ENCODE measurements at regions of chr3 and their contacts with region 1.

Region 1: DNA sequence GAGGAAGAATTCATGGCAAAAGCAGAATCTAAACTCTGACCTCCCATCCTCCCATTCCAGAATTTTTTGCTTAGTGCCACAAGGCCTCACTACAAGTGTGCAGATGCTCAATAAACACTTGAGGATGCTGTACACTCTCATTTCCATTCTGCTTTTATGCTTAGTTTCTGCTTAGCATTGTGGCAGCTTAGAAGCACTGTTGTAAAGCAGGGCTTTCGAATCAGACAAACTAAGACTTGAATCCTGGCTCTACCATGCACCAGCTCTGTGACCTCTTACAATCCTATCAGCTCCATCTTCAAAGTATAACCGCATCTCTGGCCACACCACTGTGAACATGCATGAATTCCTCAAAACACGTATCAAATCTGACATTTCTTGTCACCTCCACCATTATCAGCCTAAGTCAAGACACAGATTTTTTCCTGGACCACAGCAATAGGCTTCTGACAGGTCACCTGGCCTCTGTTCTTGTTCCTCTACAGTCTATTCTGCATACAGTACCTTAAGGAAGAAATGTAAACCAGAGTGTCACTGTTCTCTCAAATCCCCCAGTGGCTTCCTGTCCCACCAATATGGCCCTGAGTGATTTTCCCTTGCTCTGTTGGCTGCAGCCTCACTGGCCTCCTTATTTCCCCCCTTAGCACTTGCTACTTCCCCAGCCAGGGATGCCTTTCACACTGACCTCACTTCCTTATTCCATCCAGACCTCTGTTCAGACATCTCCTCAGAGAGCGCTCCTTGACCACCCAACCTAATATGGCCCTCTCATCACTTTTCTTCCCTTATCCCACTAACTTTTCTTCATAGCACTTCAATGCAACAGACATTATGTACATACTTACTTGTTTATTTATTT is 8.1 kb upstream of the PHC3 start:
- DNase-seq: no peak
- ATAC-seq: peak; percentile 50
- H3K4me3 ChIP-seq: peak overlapping the region in 1 of 3 experiments; percentile 25; a peak in 1 of 6 replicates
- H3K27ac ChIP-seq: no peak overlapping the region
- H3K4me1 ChIP-seq: peaks cover 29% of the 10 kb centered on the region
- H3K27me3 ChIP-seq: no peaks in the 10 kb centered on the region
- CTCF ChIP-seq: no peak
- EP300 ChIP-seq: no peak
- POLR2A ChIP-seq: no peak
- RAD21 ChIP-seq: no peak

Region 2: GRCh38 chr3:170205302-170205701 is 15.7 kb after region 1 on chr3:
- CTCF ChIA-PET with region 1: no interaction called
- POLR2A ChIA-PET with region 1: no interaction called
- in situ Hi-C with region 1: no loop called
- intact Hi-C with region 1: loop called (anchors 2 kb)
- DNase-seq: no peak
- ATAC-seq: no peak
- H3K4me3 ChIP-seq: no peak overlapping the region
- H3K27ac ChIP-seq: no peak overlapping the region
- H3K4me1 ChIP-seq: peaks cover 64% of the 10 kb centered on the region
- H3K27me3 ChIP-seq: no peaks in the 10 kb centered on the region
- CTCF ChIP-seq: no peak
- EP300 ChIP-seq: no peak
- POLR2A ChIP-seq: no peak
- RAD21 ChIP-seq: no peak

Region 3: DNA sequence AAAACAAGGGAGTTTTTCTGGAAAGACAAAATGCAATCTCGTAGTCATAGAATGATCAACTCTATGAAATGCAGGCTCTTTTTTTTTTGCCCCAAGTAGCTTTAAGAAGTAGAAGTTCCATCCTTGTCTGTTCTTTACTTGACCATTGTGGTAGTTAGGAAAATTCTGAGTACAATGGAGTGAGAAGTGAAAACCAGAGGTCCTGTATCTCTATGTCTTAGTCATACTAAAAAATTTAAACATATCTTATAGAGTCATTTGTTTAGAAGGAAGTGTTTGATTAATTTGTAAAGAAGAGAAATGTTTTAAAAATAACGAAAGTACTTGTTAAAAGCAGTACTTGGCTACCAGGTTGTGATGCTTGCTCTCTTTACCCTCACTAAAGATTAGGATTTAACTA is 85.0 kb after region 1 on chr3:
- CTCF ChIA-PET with region 1: no interaction called
- POLR2A ChIA-PET with region 1: no interaction called
- in situ Hi-C with region 1: no loop called
- intact Hi-C with region 1: loop called (anchors 5 kb)
- DNase-seq: no peak
- ATAC-seq: no peak
- H3K4me3 ChIP-seq: no peak overlapping the region
- H3K27ac ChIP-seq: no peak overlapping the region
- H3K4me1 ChIP-seq: peaks cover 20% of the 10 kb centered on the region
- H3K27me3 ChIP-seq: no peaks in the 10 kb centered on the region
- CTCF ChIP-seq: no peak
- EP300 ChIP-seq: no peak
- POLR2A ChIP-seq: no peak
- RAD21 ChIP-seq: no peak

Region 4: GRCh38 chr3:170368921-170369320 is 179.3 kb after region 1 on chr3:
- CTCF ChIA-PET with region 1: no interaction called
- POLR2A ChIA-PET with region 1: no interaction called
- in situ Hi-C with region 1: no loop called
- intact Hi-C with region 1: loop called (anchors 5 kb)
- DNase-seq: no peak
- ATAC-seq: no peak
- H3K4me3 ChIP-seq: no peak overlapping the region
- H3K27ac ChIP-seq: no peak overlapping the region
- H3K4me1 ChIP-seq: peaks cover 12% of the 10 kb centered on the region
- H3K27me3 ChIP-seq: no peaks in the 10 kb centered on the region
- CTCF ChIP-seq: no peak
- EP300 ChIP-seq: no peak
- POLR2A ChIP-seq: no peak
- RAD21 ChIP-seq: no peak